Activated T-helper 1 cell treated with anti-CD3 and anti-CD28 coated beads, Interleukin-12 subunit alpha, Interleukin-12 subunit beta, Interleukin-2, Interleukin-4 antibody, amounts not matched to agents 30 ng/mL and 10 ng/mL and 1 ng/mL, durations not matched to agents 14 hours and 24 hours and 36 hours (primary cell): ENCODE measurements at regions of chr17 and their contacts with region 1.

Region 1: GRCh38 chr17:60421273-60421934 is 885 bp upstream of the CHCT1 start:
- DNase-seq: peak; percentile 63
- H3K4me3 Mint-ChIP-seq: peak overlapping the region; percentile 78
- H3K27ac Mint-ChIP-seq: peak overlapping the region; percentile 42
- H3K4me1 Mint-ChIP-seq: peaks cover 7% of the 10 kb centered on the region
- H3K27me3 Mint-ChIP-seq: peaks cover 6% of the 10 kb centered on the region

Region 2: DNA sequence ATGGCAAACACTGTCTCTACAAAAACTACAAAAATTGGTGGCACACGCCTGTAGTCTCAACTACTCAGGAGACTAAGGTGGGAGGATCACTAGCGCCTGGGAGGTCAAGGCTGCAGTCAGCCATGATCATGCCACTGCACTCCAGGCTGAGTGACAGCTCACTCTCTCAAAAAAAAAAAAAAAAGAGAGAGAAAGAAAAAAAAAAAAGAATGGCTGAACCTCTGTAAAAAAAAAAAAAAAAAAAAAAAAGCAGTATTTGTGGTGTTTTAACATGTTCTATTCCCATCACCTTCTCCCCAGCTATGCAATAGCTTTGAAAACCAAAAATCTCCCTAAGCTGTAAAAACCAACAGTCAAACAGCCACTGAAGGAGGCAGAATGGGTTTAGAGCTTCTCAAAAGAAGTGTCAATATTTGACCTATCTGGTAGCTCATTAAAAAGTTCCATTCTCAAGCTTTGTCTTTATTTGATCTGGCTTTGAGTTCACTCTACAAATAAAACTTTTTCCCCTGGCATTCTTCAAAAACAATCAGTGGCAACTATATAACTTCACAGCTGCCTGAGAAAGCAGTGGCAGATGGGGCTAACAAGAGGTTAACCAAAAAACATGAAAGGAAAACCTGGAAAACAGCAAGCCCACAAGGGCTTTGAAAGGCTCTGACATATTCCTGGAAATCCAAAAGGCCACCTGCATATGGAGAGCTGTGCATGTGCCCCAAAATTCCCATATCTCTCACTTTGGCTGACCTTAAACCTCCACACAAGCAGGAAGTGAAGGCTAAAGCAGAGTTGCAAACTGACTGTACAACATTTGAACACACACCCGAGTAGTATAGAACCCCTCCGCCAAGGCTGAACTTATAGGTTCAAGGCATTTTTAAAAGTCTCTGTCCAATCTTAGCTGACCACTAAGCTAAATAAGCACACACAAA is 65.5 kb before region 1 on chr17:
- intact Hi-C with region 1: loop called (anchors 1 kb)
- DNase-seq: no peak
- H3K4me3 Mint-ChIP-seq: peak overlapping the region; percentile 47
- H3K27ac Mint-ChIP-seq: peak overlapping the region; percentile 85
- H3K4me1 Mint-ChIP-seq: peaks cover 32% of the 10 kb centered on the region
- H3K27me3 Mint-ChIP-seq: no peaks in the 10 kb centered on the region

Region 3: GRCh38 chr17:60525685-60526514 is 104.5 kb after region 1 on chr17 and contains the start of gene APPBP2:
- intact Hi-C with region 1: no loop called
- DNase-seq: peak; percentile 69
- H3K4me3 Mint-ChIP-seq: peak within 1 kb of the TSS; percentile 98
- H3K27ac Mint-ChIP-seq: peak within 1 kb of the TSS; percentile 96
- H3K4me1 Mint-ChIP-seq: peaks cover 49% of the 10 kb centered on the region
- H3K27me3 Mint-ChIP-seq: no peaks in the 10 kb centered on the region
- total RNA-seq, gene APPBP2: 23.4 and 28.1 TPM in 2 replicates